Psoas muscle (tissue), 8 donors: ENCODE measurements at regions of chr6 and their contacts with region 1.

Region 1: GRCh38 chr6:164502833-164503232 is 806.6 kb downstream of the C6orf118 start:
- DNase-seq: no peak
- ATAC-seq: no peak
- H3K4me3 ChIP-seq: no peak overlapping the region
- H3K27ac ChIP-seq: no peak overlapping the region
- H3K4me1 ChIP-seq: no peaks in the 10 kb centered on the region
- H3K27me3 ChIP-seq: no peaks in the 10 kb centered on the region
- CTCF ChIP-seq: no peak

Region 2: DNA sequence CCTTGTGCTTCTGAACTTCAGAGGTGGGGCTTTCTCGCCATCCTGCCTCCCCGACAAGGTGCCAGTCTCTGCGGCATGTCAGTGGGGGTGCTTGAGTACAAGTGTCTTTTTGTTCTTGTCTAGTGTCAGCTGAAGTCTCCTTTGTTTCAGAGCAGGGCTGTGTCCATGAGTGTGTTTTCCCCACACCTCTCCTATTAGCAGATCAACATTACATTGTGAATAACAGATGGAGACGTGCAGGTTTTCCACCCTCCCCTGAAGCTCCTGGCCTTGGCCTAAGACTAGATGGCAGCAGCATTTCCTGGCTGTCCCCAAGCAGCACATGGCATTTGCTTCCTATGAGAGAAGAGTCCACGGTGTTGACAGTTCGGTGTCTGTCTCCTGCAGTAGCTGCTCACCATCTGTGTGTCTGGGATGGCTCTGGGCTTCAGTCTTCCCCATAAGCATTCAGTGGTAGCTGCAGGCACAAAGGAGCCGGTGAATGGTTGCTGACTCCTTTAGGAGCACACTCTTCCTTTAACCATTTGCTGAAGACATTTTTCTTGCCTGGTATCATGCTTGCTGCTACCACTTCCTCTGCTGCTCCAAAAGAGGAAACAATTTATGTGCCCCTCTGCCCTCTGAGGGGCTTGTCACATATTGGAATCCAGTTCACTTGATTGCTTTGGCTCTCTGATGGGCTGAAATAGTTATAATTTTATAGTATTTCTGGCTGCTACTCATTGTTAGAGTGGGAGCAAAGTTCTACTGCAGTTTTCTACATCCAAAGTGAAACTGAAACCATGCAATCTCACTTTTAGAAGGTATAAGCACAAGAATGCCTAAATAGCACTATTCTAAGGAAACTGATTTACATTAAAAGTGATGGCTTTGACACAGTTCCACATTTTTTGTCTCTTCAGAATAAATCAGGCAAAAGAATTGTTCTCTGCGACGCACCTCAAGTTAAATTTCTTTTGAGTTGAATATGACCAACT is 106.5 kb before region 1 on chr6:
- intact Hi-C with region 1: no loop called
- DNase-seq: no peak
- ATAC-seq: peak; percentile 22 to 59 (median 40)
- H3K4me3 ChIP-seq: peak overlapping the region; percentile 56
- H3K27ac ChIP-seq: peak overlapping the region; percentile 55
- H3K4me1 ChIP-seq: no peaks in the 10 kb centered on the region
- H3K27me3 ChIP-seq: no peaks in the 10 kb centered on the region
- CTCF ChIP-seq: no peak

Region 3: DNA sequence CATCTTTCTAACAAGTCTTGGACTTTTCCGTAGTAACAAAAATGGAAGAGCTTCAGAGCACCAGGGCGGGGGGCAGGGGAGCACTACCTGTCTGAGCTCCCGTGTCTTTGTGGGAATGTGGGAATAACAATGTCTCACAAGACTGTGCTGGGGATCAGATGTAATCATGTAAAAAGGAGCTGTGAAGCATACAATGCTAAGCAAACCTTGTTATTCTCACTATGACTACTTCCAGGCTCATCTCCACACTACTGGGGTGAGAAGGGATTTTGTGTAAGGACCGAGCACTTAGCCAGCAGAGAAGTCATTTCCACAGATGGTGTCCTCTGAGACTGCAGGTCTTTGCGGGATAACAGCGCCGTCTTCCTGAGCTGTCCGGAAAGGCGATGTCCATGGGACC is 1778.3 kb after region 1 on chr6:
- intact Hi-C with region 1: loop called in 1 of 2 experiments (anchors 5 kb)
- DNase-seq: no peak
- ATAC-seq: no peak
- H3K4me3 ChIP-seq: no peak overlapping the region
- H3K27ac ChIP-seq: no peak overlapping the region
- H3K4me1 ChIP-seq: no peaks in the 10 kb centered on the region
- H3K27me3 ChIP-seq: peaks cover 0 to 17% (median 4%) of the 10 kb centered on the region in 3 donors
- CTCF ChIP-seq: no peak